ENCODE measurements at regions of chr1 and their contacts with region 1.

Region 1: DNA sequence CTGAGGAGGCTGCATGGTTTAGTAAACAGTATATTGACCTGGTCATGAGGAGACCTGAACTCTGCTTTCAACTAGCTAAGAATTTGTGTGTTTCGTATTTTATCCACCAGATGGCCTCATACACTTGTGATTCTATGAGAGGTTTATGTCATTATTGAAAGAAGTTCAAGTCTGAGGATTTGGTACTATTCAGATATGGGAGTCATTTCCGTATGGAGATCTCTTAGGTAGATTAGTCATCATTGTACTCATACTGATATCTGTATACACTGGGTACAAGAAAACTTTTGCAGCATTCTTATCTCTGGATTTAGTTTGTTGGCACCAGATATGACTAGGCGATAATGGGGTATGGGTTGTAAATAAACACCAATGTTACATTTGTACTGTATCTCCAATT is 26.6 kb downstream of the ATF6 start:
- DNase-seq: no peak
- H3K4me3 Mint-ChIP-seq: no peak overlapping the region
- H3K27ac Mint-ChIP-seq: no peak overlapping the region
- H3K4me1 Mint-ChIP-seq: peaks cover 13% of the 10 kb centered on the region
- H3K27me3 Mint-ChIP-seq: no peaks in the 10 kb centered on the region

Region 2: GRCh38 chr1:161706482-161707347 is 86.0 kb before region 1 on chr1 and contains the start of gene FCRLA:
- CTCF ChIA-PET with region 1: no interaction called
- intact Hi-C with region 1: no loop called
- DNase-seq: no peak
- H3K4me3 Mint-ChIP-seq: no peak within 1 kb of the TSS
- H3K27ac Mint-ChIP-seq: no peak within 1 kb of the TSS
- H3K4me1 Mint-ChIP-seq: no peaks in the 10 kb centered on the region
- H3K27me3 Mint-ChIP-seq: no peaks in the 10 kb centered on the region
- total RNA-seq, gene FCRLA: not detected

Region 3: GRCh38 chr1:161781995-161782394 is 10.7 kb before region 1 on chr1:
- CTCF ChIA-PET with region 1: interaction called, 17 read pairs
- intact Hi-C with region 1: no loop called
- DNase-seq: no peak
- H3K4me3 Mint-ChIP-seq: no peak overlapping the region
- H3K27ac Mint-ChIP-seq: no peak overlapping the region
- H3K4me1 Mint-ChIP-seq: peaks cover 11% of the 10 kb centered on the region
- H3K27me3 Mint-ChIP-seq: no peaks in the 10 kb centered on the region

Region 4: GRCh38 chr1:161905269-161905884 is 112.6 kb after region 1 on chr1:
- CTCF ChIA-PET with region 1: interaction called, 12 read pairs
- intact Hi-C with region 1: loop called (anchors 1 kb)
- DNase-seq: peak; percentile 60
- H3K4me3 Mint-ChIP-seq: no peak overlapping the region
- H3K27ac Mint-ChIP-seq: no peak overlapping the region
- H3K4me1 Mint-ChIP-seq: peaks cover 41% of the 10 kb centered on the region
- H3K27me3 Mint-ChIP-seq: no peaks in the 10 kb centered on the region

Region 5: GRCh38 chr1:161962091-161962887 is 169.5 kb after region 1 on chr1:
- CTCF ChIA-PET with region 1: no interaction called
- intact Hi-C with region 1: loop called (anchors 1 kb)
- DNase-seq: peak; percentile 81
- H3K4me3 Mint-ChIP-seq: peak overlapping the region; percentile 64
- H3K27ac Mint-ChIP-seq: peak overlapping the region; percentile 96
- H3K4me1 Mint-ChIP-seq: peaks cover 61% of the 10 kb centered on the region
- H3K27me3 Mint-ChIP-seq: no peaks in the 10 kb centered on the region

Region 6: DNA sequence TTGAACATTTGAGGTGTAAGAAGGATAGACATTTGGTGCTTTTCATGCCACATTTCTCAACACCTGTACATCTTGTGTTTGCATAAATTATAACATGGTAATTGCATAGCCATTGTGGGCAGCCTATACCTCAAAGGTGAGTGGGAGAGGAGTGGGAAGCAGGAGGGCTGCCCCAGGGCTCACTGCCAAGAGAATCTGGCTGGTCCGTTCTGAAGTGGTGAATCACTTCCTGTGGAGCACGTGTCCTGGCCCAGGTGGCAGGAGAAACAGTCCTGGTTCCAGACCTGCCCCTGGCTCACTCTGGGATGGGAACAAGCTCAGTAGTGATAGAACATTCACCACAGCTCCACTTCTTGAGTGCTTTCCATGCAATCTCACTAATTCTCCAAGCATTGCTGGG is 242.5 kb after region 1 on chr1:
- CTCF ChIA-PET with region 1: interaction called, 173 read pairs
- intact Hi-C with region 1: loop called (anchors 1 kb)
- DNase-seq: peak; percentile 39
- H3K4me3 Mint-ChIP-seq: no peak overlapping the region
- H3K27ac Mint-ChIP-seq: no peak overlapping the region
- H3K4me1 Mint-ChIP-seq: peaks cover 11% of the 10 kb centered on the region
- H3K27me3 Mint-ChIP-seq: peaks cover 3% of the 10 kb centered on the region

Region 7: DNA sequence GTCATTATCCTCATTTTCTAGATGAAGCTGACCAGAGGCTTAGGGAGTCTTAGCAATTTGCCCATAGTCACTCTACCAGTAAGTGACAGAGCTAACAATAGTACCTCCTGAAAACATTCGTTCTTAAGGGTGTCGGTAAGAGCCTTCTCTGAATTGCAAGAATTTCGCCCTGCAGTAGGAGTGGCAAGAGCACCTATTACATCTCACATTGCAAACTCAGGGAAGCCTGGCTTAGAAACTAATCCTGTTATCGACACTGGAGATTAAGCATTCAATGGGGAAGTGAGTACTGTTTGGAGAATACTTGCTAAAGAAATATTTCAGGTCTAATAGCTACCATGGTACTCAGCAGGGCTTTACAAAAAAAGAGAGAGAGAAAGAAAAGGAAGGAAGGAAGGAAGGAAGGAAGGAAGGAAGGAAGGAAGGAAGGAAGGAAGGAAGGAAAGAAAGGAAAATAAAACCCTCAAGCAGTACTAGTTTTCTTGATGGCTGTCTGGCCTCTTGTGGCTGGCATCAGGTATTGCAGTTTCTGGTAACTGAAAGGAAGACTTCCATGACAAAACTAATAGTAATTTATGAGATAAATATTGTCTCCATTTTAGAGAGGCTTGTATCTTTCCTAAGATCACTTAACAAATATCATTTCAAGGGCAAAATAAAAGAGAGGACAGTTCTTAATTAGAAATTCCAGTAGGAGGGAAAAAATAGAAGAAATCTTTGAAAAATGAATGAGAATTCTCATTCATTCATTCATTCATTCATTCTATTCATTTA is 599.2 kb after region 1 on chr1:
- CTCF ChIA-PET with region 1: no interaction called
- intact Hi-C with region 1: loop called (anchors 1 kb)
- DNase-seq: peak; percentile 48
- H3K4me3 Mint-ChIP-seq: no peak overlapping the region
- H3K27ac Mint-ChIP-seq: no peak overlapping the region
- H3K4me1 Mint-ChIP-seq: no peaks in the 10 kb centered on the region
- H3K27me3 Mint-ChIP-seq: peaks cover 14% of the 10 kb centered on the region